ENCODE measurements at regions of chr7 and their contacts with region 1.

Region 1: DNA sequence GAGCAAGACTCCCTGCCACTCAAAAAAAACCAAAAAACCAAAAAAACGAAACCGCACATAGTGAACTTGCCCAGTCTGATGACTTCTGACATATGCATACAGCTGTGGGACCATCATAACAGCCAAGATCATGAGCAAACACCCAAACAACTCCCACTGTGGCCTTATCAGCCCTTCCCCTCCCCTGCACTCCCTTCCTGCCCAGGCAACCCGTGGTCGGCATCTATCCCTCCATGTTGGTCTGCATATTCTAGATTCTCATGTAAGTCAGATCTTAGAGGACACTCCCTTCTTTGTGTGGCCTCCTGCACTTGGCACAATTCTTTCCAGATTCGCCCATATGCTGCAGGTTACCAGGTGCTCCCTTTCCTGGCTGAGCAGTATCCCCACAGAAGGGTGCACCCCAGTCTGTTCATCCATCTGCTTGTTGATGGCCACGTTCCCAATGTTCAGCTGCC is 72.8 kb downstream of the GNA12 start:
- DNase-seq: no peak
- ATAC-seq: no peak
- H3K4me3 ChIP-seq: no peak overlapping the region
- H3K4me3 Mint-ChIP-seq: peak overlapping the region; percentile 60
- H3K27ac ChIP-seq: no peak overlapping the region
- H3K27ac Mint-ChIP-seq: peak overlapping the region; percentile 80
- H3K4me1 ChIP-seq: peaks cover 15 to 19% of the 10 kb centered on the region in 2 donors
- H3K4me1 Mint-ChIP-seq: peaks cover 46% of the 10 kb centered on the region
- H3K27me3 ChIP-seq: no peaks in the 10 kb centered on the region
- H3K27me3 Mint-ChIP-seq: no peaks in the 10 kb centered on the region
- CTCF ChIP-seq: no peak

Region 2: DNA sequence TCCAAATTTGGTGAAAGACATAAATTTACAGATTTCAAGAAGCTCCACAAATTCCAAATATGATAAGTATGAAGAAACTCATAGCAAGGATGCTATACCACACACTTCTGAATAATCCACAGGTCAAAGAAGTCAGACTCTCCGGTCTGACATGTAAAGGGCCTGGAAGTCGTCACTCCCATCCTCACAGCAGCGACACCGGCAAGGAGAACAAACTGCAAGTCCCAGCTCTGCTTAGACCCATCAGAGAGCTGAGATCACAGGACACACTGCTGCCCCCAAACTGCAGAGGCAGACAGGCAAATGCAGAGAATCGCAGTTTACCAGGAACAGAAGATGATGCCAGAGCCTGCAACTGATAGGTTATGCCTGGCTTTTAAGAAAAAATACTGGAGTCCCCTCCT is 21.3 kb before region 1 on chr7:
- CTCF ChIA-PET with region 1: no interaction called
- POLR2A ChIA-PET with region 1: no interaction called
- intact Hi-C with region 1: no loop called
- DNase-seq: no peak
- ATAC-seq: no peak
- H3K4me3 ChIP-seq: no peak overlapping the region
- H3K4me3 Mint-ChIP-seq: no peak overlapping the region
- H3K27ac ChIP-seq: no peak overlapping the region
- H3K27ac Mint-ChIP-seq: no peak overlapping the region
- H3K4me1 ChIP-seq: no peaks in the 10 kb centered on the region
- H3K4me1 Mint-ChIP-seq: peaks cover 31% of the 10 kb centered on the region
- H3K27me3 ChIP-seq: no peaks in the 10 kb centered on the region
- H3K27me3 Mint-ChIP-seq: no peaks in the 10 kb centered on the region
- CTCF ChIP-seq: no peak

Region 3: DNA sequence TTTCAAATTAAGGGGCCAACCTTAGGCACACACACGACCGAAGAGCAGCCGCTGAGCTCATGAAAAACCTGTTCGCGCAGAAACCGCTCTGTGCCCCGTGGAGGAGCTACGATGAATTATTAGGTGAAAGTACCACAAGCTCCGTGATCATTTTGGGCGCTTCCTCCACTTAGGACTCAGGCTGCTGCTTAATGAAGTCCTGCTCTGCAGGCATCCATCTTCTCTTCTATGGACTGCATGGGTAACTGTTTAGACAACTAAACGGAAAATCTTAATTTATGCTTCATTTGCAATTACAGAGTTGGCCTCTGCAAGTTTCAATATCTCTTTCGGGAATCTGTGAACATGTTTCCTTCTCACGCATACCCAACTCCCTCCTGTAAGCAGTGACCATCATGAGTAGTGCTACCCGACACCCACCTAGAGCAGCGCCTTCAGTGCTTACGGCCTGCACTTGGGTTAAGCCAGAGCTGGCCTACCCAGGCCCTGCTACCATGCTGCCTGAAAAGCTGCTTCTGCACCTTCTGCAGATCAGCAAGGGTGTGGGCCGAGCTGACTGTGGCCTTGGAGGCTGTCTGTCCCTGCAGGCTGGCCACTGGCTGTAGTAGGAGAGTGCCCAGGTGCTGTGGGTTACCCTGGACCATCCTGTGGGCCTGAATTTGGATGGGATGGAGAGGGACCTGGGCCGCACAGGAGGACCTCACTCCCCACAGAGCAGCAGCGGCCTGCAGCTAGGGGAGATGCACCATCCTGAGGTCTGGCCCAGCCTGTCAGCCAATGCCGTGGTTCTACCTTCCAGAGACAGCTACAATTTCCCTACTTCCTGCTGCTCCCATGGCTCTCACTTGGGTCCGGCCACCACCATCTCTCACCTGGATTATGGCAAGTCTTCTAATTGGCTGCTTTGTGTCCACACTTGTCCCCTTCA is 36.8 kb after region 1 on chr7:
- CTCF ChIA-PET with region 1: no interaction called
- POLR2A ChIA-PET with region 1: no interaction called
- intact Hi-C with region 1: loop called (anchors 5 kb)
- DNase-seq: no peak
- ATAC-seq: peak; percentile 14
- H3K4me3 ChIP-seq: no peak overlapping the region
- H3K4me3 Mint-ChIP-seq: peak overlapping the region; percentile 52
- H3K27ac ChIP-seq: no peak overlapping the region
- H3K27ac Mint-ChIP-seq: peak overlapping the region; percentile 57
- H3K4me1 ChIP-seq: peaks cover 18 to 31% of the 10 kb centered on the region in 2 donors
- H3K4me1 Mint-ChIP-seq: peaks cover 58% of the 10 kb centered on the region
- H3K27me3 ChIP-seq: no peaks in the 10 kb centered on the region
- H3K27me3 Mint-ChIP-seq: no peaks in the 10 kb centered on the region
- CTCF ChIP-seq: no peak

Region 4: DNA sequence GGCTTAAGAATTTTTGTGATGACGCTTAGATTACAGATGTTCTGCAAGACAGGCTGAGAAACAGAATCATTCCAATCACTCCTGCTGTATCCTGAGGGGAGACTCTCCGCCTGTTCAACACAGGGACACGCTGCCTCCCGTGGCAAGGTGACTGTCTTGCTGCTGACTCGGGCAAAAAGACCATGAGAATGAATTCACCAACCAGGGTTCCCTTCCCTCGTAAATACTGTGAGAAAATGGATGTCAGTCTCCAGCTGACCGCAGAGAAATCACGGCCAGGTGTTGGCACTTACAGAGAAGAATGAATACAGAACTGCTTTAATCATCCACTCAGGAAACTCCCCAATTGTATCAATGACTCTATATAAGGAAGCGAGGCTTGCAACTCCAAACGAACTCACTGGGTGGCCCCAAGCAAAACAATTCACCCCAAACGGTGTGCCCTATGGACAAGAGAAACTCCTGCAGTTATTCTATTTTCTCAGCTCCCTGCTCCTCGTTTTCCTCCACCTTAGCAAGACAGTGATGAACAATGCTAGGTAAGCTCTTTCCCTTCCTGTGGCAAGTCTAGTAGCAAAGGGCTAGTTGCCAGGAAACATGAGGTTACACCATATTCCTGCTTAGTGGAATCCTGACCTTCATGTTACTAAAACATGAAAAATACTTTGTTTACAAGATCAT is 50.0 kb after region 1 on chr7:
- CTCF ChIA-PET with region 1: no interaction called
- POLR2A ChIA-PET with region 1: interaction called, 3 read pairs
- intact Hi-C with region 1: loop called (anchors 5 kb)
- DNase-seq: peak; percentile 78
- ATAC-seq: peak; percentile 60
- H3K4me3 ChIP-seq: peak overlapping the region in 2 of 5 experiments; percentile 16 to 21
- H3K4me3 Mint-ChIP-seq: peak overlapping the region; percentile 86
- H3K27ac ChIP-seq: peak overlapping the region; percentile 52 to 68
- H3K27ac Mint-ChIP-seq: peak overlapping the region; percentile 87
- H3K4me1 ChIP-seq: peaks cover 49 to 54% of the 10 kb centered on the region in 2 donors
- H3K4me1 Mint-ChIP-seq: peaks cover 72% of the 10 kb centered on the region
- H3K27me3 ChIP-seq: no peaks in the 10 kb centered on the region
- H3K27me3 Mint-ChIP-seq: no peaks in the 10 kb centered on the region
- CTCF ChIP-seq: no peak

Region 5: GRCh38 chr7:2838873-2839578 is 67.7 kb after region 1 on chr7:
- CTCF ChIA-PET with region 1: no interaction called
- POLR2A ChIA-PET with region 1: interaction called, 3 read pairs
- intact Hi-C with region 1: loop called (anchors 1 kb)
- DNase-seq: peak; percentile 84
- ATAC-seq: peak; percentile 89
- H3K4me3 ChIP-seq: peak overlapping the region in 1 of 5 experiments; percentile 5
- H3K4me3 Mint-ChIP-seq: peak overlapping the region; percentile 69
- H3K27ac ChIP-seq: peak overlapping the region; percentile 81
- H3K27ac Mint-ChIP-seq: peak overlapping the region; percentile 87
- H3K4me1 ChIP-seq: peaks cover 55 to 69% of the 10 kb centered on the region in 2 donors
- H3K4me1 Mint-ChIP-seq: peaks cover 69% of the 10 kb centered on the region
- H3K27me3 ChIP-seq: no peaks in the 10 kb centered on the region
- H3K27me3 Mint-ChIP-seq: no peaks in the 10 kb centered on the region
- CTCF ChIP-seq: no peak

Region 6: GRCh38 chr7:2844165-2844898 is 73.0 kb after region 1 on chr7 and contains the start of gene GNA12:
- CTCF ChIA-PET with region 1: no interaction called
- POLR2A ChIA-PET with region 1: interaction called, 3 read pairs
- intact Hi-C with region 1: loop called (anchors 1 kb)
- DNase-seq: peak; percentile 98
- ATAC-seq: peak; percentile 93
- H3K4me3 ChIP-seq: peak within 1 kb of the TSS; percentile 50 to 70 (median 65)
- H3K4me3 Mint-ChIP-seq: peak within 1 kb of the TSS; percentile 95
- H3K27ac ChIP-seq: peak within 1 kb of the TSS in 1 of 2 donors; percentile 53
- H3K27ac Mint-ChIP-seq: peak within 1 kb of the TSS; percentile 80
- H3K4me1 ChIP-seq: peaks cover 34 to 45% of the 10 kb centered on the region in 2 donors
- H3K4me1 Mint-ChIP-seq: peaks cover 51% of the 10 kb centered on the region
- H3K27me3 ChIP-seq: no peaks in the 10 kb centered on the region
- H3K27me3 Mint-ChIP-seq: no peaks in the 10 kb centered on the region
- CTCF ChIP-seq: no peak
- total RNA-seq, gene GNA12: 110 and 114 TPM in 2 replicates